ENCODE measurements at regions of chr5 and their contacts with region 1.

Region 1: DNA sequence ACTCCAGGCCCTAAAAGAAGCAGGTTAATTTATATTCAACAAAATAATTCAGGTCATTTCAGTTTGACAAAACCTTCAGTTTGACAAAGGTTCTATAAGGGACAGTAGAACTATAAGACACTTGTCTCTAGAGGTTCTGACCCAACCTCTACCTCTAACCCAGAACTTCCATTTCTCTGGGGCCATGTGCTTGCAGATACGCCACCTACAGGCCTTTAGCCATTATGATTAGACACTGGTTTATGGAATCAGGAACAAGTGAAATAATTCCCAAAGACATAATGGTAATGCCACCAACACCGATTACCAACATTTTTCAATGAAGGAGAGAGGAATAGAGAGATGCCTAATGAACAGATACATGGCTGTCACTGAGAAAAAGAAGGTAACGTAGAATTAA is 733.9 kb downstream of the PRELID2 start:
- DNase-seq: no peak
- ATAC-seq: no peak
- H3K4me3 ChIP-seq: no peak overlapping the region
- H3K4me3 Mint-ChIP-seq: no peak overlapping the region
- H3K27ac ChIP-seq: no peak overlapping the region
- H3K27ac Mint-ChIP-seq: no peak overlapping the region
- H3K4me1 ChIP-seq: no peaks in the 10 kb centered on the region
- H3K4me1 Mint-ChIP-seq: no peaks in the 10 kb centered on the region
- H3K27me3 ChIP-seq: no peaks in the 10 kb centered on the region
- H3K27me3 Mint-ChIP-seq: no peaks in the 10 kb centered on the region

Region 2: DNA sequence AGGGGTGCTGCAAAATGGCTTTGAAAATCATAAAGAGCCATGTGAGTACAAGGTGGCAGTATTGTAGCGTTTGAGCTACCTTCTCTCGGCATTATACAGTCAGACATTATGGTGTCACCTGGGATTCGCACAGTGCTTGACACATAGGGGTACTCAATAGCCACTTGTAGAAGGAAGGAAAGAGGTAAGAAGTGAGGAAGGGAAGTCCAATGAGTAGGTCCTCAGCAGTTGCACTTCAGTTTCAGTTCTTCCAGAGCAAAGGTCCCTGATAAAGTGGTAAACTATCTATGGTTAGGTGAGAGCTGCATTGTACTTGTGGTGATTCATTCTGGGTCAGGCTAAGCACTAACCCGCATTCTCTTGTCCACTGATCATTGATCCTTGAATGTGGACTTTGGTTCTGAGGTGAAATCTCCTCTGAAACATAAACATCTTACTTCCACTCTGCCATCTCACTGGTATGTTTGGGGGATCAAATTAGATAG is 1531.1 kb before region 1 on chr5:
- CTCF ChIA-PET with region 1: no interaction called
- POLR2A ChIA-PET with region 1: interaction called in 1 of 2 experiments, 10 read pairs
- DNase-seq: no peak
- ATAC-seq: no peak
- H3K4me3 ChIP-seq: no peak overlapping the region
- H3K4me3 Mint-ChIP-seq: no peak overlapping the region
- H3K27ac ChIP-seq: no peak overlapping the region
- H3K27ac Mint-ChIP-seq: no peak overlapping the region
- H3K4me1 ChIP-seq: no peaks in the 10 kb centered on the region
- H3K4me1 Mint-ChIP-seq: no peaks in the 10 kb centered on the region
- H3K27me3 ChIP-seq: no peaks in the 10 kb centered on the region
- H3K27me3 Mint-ChIP-seq: peaks cover 0 to 4% of the 10 kb centered on the region in 2 donors

Region 3: DNA sequence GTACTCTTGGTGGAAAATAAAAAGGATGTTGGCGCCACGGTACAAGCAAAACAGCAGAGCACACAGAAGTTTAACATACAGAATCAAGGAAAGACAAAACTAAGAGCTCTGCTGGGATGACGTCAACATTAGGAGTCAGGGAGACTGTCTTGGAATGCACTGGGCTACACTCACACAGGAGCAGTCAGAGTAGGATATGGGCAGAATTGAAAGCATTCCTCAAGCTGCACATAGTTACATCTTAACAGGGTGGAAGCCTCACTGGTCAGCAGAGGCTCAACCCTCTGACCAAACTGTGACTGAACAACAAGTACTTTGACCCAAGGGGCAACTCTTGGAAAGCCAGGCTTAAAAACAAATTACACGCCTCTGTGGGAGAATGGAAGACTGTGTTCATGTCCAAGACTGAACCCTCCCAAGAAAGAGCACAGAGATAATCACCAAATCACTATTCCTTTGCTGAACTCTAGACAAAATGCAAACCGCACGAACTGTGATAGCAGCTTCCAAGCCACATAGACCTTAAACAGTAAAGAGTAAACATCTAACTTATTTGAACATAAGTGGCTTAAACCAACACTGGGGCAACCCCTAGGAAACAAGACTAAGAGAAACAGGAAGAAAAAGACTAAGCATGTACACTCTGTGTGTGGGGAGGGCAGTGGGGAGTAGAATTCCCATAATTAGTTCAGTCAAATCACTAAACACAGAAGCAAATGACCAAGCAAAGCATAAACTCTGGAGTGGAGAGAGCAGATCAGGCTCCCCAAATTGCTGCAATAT is 38.8 kb before region 1 on chr5:
- CTCF ChIA-PET with region 1: no interaction called
- POLR2A ChIA-PET with region 1: no interaction called
- DNase-seq: no peak
- ATAC-seq: no peak
- H3K4me3 ChIP-seq: no peak overlapping the region
- H3K4me3 Mint-ChIP-seq: no peak overlapping the region
- H3K27ac ChIP-seq: no peak overlapping the region
- H3K27ac Mint-ChIP-seq: no peak overlapping the region
- H3K4me1 ChIP-seq: no peaks in the 10 kb centered on the region
- H3K4me1 Mint-ChIP-seq: no peaks in the 10 kb centered on the region
- H3K27me3 ChIP-seq: no peaks in the 10 kb centered on the region
- H3K27me3 Mint-ChIP-seq: no peaks in the 10 kb centered on the region

Region 4: GRCh38 chr5:145130996-145131395 is 29.8 kb after region 1 on chr5:
- CTCF ChIA-PET with region 1: no interaction called
- POLR2A ChIA-PET with region 1: no interaction called
- DNase-seq: no peak
- ATAC-seq: no peak
- H3K4me3 ChIP-seq: no peak overlapping the region
- H3K4me3 Mint-ChIP-seq: no peak overlapping the region
- H3K27ac ChIP-seq: no peak overlapping the region
- H3K27ac Mint-ChIP-seq: no peak overlapping the region
- H3K4me1 ChIP-seq: no peaks in the 10 kb centered on the region
- H3K4me1 Mint-ChIP-seq: no peaks in the 10 kb centered on the region
- H3K27me3 ChIP-seq: no peaks in the 10 kb centered on the region
- H3K27me3 Mint-ChIP-seq: no peaks in the 10 kb centered on the region

Region 5: DNA sequence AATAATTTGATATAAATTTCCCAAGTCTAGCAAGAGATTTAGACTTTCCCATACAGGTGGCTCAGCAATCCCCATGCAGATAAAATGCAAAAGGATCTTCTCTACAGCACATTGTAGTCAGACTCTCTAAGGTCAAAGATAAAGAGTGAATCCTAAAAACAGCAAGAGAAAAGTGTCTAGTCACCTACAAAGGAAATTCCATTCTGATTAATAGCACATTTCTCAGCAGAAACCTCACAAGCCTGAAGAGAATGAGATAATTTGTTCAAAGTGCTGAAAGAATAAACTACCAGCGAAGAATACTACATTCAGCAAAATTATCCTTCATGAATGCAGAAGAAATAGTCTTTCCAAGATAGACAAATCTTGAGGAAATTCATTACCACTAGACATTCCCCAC is 240.6 kb after region 1 on chr5:
- CTCF ChIA-PET with region 1: no interaction called
- POLR2A ChIA-PET with region 1: no interaction called
- DNase-seq: no peak
- ATAC-seq: no peak
- H3K4me3 ChIP-seq: no peak overlapping the region
- H3K4me3 Mint-ChIP-seq: no peak overlapping the region
- H3K27ac ChIP-seq: no peak overlapping the region
- H3K27ac Mint-ChIP-seq: no peak overlapping the region
- H3K4me1 ChIP-seq: no peaks in the 10 kb centered on the region
- H3K4me1 Mint-ChIP-seq: no peaks in the 10 kb centered on the region
- H3K27me3 ChIP-seq: no peaks in the 10 kb centered on the region
- H3K27me3 Mint-ChIP-seq: no peaks in the 10 kb centered on the region

Measured in T-cell (primary cell).